ENCODE measurements at regions of chr14 and their contacts with region 1.

Region 1: GRCh38 chr14:100192672-100193416 is 33.4 kb upstream of the DEGS2 start:
- DNase-seq: peak; percentile 99
- ATAC-seq: peak; percentile 99 to 100
- H3K4me3 ChIP-seq: peak overlapping the region; percentile 33
- H3K27ac ChIP-seq: peak overlapping the region; percentile 85 to 92
- H3K4me1 ChIP-seq: peaks cover 15% of the 10 kb centered on the region
- CTCF ChIP-seq: peak; percentile 84
- EP300 ChIP-seq: no peak
- POLR2A ChIP-seq: peak; percentile 39
- RAD21 ChIP-seq: peak; percentile 83 to 94

Region 2: GRCh38 chr14:100037353-100037752 is 155.5 kb before region 1 on chr14:
- CTCF ChIA-PET with region 1: interaction called, 18 read pairs
- POLR2A ChIA-PET with region 1: no interaction called
- DNase-seq: no peak
- ATAC-seq: no peak
- H3K4me3 ChIP-seq: no peak overlapping the region
- H3K27ac ChIP-seq: peak overlapping the region in 1 of 2 experiments; percentile 13; a peak in 2 of 6 replicates
- H3K4me1 ChIP-seq: peaks cover 34% of the 10 kb centered on the region
- CTCF ChIP-seq: no peak
- EP300 ChIP-seq: no peak
- POLR2A ChIP-seq: no peak
- RAD21 ChIP-seq: no peak

Region 3: GRCh38 chr14:100122481-100123222 is 70.2 kb before region 1 on chr14:
- CTCF ChIA-PET with region 1: interaction called, 11 read pairs
- POLR2A ChIA-PET with region 1: no interaction called
- DNase-seq: no peak
- ATAC-seq: peak; percentile 35 to 50; a peak in 3 of 6 replicates
- H3K4me3 ChIP-seq: no peak overlapping the region
- H3K27ac ChIP-seq: no peak overlapping the region
- H3K4me1 ChIP-seq: no peaks in the 10 kb centered on the region
- CTCF ChIP-seq: no peak
- EP300 ChIP-seq: no peak
- POLR2A ChIP-seq: no peak
- RAD21 ChIP-seq: 0 out of 5 replicates have a peak, but pooled peaks of 1 of the 2 experiments have one; percentile 31

Region 4: GRCh38 chr14:100173353-100173752 is 19.5 kb before region 1 on chr14:
- CTCF ChIA-PET with region 1: interaction called, 17 read pairs
- POLR2A ChIA-PET with region 1: interaction called, 4 read pairs
- DNase-seq: no peak
- ATAC-seq: peak in 1 of 2 experiments; percentile 57; a peak in 3 of 6 replicates
- H3K4me3 ChIP-seq: no peak overlapping the region
- H3K27ac ChIP-seq: no peak overlapping the region
- H3K4me1 ChIP-seq: no peaks in the 10 kb centered on the region
- CTCF ChIP-seq: no peak
- EP300 ChIP-seq: no peak
- POLR2A ChIP-seq: no peak
- RAD21 ChIP-seq: no peak

Region 5: DNA sequence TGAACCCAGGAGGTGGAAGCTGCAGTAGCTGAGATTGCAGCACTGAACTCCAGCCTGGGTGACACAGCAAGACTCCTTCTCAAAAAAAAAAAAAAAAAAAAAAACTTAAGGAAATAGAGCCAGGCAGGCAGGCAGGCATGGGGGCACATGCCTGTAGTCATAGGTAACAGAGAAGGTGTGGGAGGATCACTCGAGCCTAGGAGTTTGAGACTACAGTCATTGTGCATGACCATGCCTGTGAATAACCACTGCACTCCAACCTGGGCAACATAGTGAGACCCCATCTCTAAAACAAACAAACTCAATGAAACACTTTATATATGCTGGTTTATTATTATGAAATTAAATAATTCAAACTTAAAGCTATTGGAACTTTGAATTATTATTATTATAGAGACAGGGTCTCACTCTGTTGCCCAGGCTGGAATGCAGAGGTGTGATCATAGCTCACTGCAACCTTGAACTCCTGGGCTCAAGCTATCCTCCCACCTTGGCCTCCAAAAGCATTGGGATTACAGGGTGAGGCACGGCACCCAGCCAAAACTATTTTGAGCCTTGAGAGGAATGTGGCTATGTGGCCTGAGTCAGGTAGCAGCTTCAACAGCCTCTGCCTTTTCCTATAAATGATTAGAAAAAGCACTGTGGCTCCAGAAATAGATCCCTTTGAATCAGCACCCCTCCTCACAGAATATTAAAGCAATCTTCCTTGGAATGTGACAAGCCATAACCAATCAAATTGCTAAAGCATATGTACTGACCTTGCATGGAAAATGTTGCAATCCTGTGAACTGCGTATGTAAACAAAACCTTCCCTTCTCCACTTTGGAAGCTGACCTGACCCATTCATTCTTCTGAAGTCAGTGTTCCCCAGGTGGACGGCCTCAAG is 11.3 kb after region 1 on chr14:
- CTCF ChIA-PET with region 1: interaction called, 53 read pairs
- POLR2A ChIA-PET with region 1: interaction called, 7 read pairs
- DNase-seq: peak in 1 of 2 experiments; percentile 79
- ATAC-seq: peak; percentile 71 to 81
- H3K4me3 ChIP-seq: no peak overlapping the region
- H3K27ac ChIP-seq: peak overlapping the region; percentile 52 to 69; a peak in 5 of 6 replicates
- H3K4me1 ChIP-seq: peaks cover 22% of the 10 kb centered on the region
- CTCF ChIP-seq: no peak
- EP300 ChIP-seq: peak in 1 of 2 experiments; percentile 34; a peak in 1 of 5 replicates
- POLR2A ChIP-seq: no peak
- RAD21 ChIP-seq: no peak

Region 6: GRCh38 chr14:100221533-100222223 is 28.8 kb after region 1 on chr14:
- CTCF ChIA-PET with region 1: interaction called, 21 read pairs
- POLR2A ChIA-PET with region 1: no interaction called
- DNase-seq: no peak
- ATAC-seq: peak; percentile 64 to 69; a peak in 5 of 6 replicates
- H3K4me3 ChIP-seq: peak overlapping the region; percentile 36
- H3K27ac ChIP-seq: peak overlapping the region; percentile 24 to 40; a peak in 4 of 6 replicates
- H3K4me1 ChIP-seq: peaks cover 5% of the 10 kb centered on the region; the same call in 1 of the 3 replicates
- CTCF ChIP-seq: no peak
- EP300 ChIP-seq: no peak
- POLR2A ChIP-seq: no peak
- RAD21 ChIP-seq: no peak

Region 7: DNA sequence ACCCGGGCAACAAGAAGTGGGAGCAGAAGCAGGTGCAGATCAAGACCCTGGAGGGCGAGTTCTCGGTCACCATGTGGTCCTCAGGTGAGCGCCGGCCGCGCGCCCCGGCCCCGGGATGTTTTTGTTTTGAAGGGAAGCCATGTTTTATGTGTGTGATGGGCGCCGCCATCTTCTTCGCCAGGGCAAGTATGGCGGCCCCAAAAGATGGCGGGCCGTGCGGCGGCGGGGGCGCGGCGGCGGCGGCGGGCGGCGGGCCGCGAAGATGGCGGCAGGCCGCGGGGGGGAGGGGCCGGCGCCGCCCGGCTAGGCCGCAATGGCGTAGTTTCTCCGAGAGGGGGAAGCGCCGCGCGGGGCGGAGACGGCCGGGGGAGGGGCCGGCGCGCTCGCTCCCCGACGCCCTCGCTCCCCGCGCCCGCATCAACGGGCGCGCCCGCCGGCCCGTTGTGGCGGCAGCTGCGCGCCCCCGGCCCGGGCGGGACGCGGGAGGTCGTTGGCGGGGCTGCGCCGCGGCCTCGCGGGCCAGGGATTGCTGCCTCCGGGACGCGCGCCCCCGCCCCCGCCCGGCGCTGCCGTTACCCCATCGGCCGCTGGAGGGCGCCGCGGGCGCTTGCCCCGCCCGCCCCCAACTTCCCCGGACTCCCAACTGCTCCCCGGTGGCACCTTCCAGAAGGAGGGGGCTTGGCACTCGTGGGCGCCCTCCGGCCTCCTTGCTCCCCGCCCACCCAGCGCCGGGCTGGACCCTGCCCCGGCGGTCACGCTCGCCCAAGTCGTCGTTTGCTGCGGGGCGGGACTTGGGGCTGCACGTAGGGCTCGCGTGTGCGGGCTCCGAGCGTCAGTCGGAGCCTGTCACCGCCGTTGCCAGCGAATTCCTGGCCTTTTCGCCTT is 47.2 kb after region 1 on chr14:
- CTCF ChIA-PET with region 1: interaction called, 15 read pairs
- POLR2A ChIA-PET with region 1: interaction called, 4 read pairs
- DNase-seq: peak; percentile 62 to 91
- ATAC-seq: peak; percentile 63 to 81
- H3K4me3 ChIP-seq: peak overlapping the region; percentile 66
- H3K27ac ChIP-seq: peak overlapping the region; percentile 96 to 98
- H3K4me1 ChIP-seq: peaks cover 42% of the 10 kb centered on the region
- CTCF ChIP-seq: peak; percentile 96
- EP300 ChIP-seq: no peak
- POLR2A ChIP-seq: peak; percentile 26; the same call in 1 of the 2 replicates
- RAD21 ChIP-seq: peak in 1 of 2 experiments; percentile 28; a peak in 2 of 5 replicates

Region 8: GRCh38 chr14:100330388-100330931 is 137.6 kb after region 1 on chr14:
- CTCF ChIA-PET with region 1: no interaction called
- POLR2A ChIA-PET with region 1: no interaction called
- DNase-seq: no peak
- ATAC-seq: peak in 1 of 2 experiments; percentile 4; a peak in 2 of 6 replicates
- H3K4me3 ChIP-seq: no peak overlapping the region
- H3K27ac ChIP-seq: no peak overlapping the region
- H3K4me1 ChIP-seq: no peaks in the 10 kb centered on the region
- CTCF ChIP-seq: no peak
- EP300 ChIP-seq: no peak
- POLR2A ChIP-seq: no peak
- RAD21 ChIP-seq: no peak

Region 9: GRCh38 chr14:100449225-100449987 is 256.6 kb after region 1 on chr14:
- CTCF ChIA-PET with region 1: no interaction called
- POLR2A ChIA-PET with region 1: no interaction called
- DNase-seq: no peak
- ATAC-seq: no peak; a peak in 1 of 6 replicates
- H3K4me3 ChIP-seq: no peak overlapping the region
- H3K27ac ChIP-seq: no peak overlapping the region
- H3K4me1 ChIP-seq: 0 out of 3 replicates have a peak, but pooled peaks cover 6% of the 10 kb centered on the region
- CTCF ChIP-seq: no peak
- EP300 ChIP-seq: no peak
- POLR2A ChIP-seq: no peak
- RAD21 ChIP-seq: no peak

Measured in A549 (cell line).